Activated T-helper 1 cell treated with anti-CD3 and anti-CD28 coated beads, Interleukin-12 subunit alpha, Interleukin-12 subunit beta, Interleukin-2, Interleukin-4 antibody, amounts not matched to agents 30 ng/mL and 10 ng/mL and 1 ng/mL, durations not matched to agents 14 hours and 24 hours and 36 hours (primary cell): ENCODE measurements at regions of chr7 and their contacts with region 1.

Region 1: DNA sequence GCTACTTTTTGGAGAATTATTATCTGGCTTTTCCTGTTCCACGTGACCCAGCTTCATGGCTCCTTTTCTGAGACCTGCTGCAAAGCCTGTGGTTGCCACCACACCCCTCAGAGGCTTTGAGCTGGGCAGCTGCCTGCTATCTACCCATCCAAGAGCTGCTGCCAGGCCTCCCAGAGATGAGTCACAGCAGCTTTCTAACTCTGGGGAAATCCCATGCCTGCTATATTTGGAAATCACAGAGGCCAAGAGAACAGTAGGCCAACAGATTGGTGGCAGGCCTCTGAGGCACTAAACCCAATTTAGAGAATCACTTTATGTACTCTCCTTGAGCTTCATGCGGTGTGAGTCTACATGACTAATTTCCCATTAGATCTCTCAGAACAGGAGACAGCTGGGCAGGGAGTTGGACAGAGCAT is 35.2 kb downstream of the SGCE start:
- DNase-seq: peak; percentile 17
- H3K4me3 Mint-ChIP-seq: peak overlapping the region; percentile 27
- H3K27ac Mint-ChIP-seq: no peak overlapping the region
- H3K4me1 Mint-ChIP-seq: peaks cover 12% of the 10 kb centered on the region
- H3K27me3 Mint-ChIP-seq: peaks cover 3% of the 10 kb centered on the region

Region 2: GRCh38 chr7:94492596-94492995 is 128.1 kb before region 1 on chr7:
- intact Hi-C with region 1: loop called (anchors 5 kb)
- DNase-seq: no peak
- H3K4me3 Mint-ChIP-seq: no peak overlapping the region
- H3K27ac Mint-ChIP-seq: no peak overlapping the region
- H3K4me1 Mint-ChIP-seq: no peaks in the 10 kb centered on the region
- H3K27me3 Mint-ChIP-seq: peaks cover 9% of the 10 kb centered on the region

Region 3: DNA sequence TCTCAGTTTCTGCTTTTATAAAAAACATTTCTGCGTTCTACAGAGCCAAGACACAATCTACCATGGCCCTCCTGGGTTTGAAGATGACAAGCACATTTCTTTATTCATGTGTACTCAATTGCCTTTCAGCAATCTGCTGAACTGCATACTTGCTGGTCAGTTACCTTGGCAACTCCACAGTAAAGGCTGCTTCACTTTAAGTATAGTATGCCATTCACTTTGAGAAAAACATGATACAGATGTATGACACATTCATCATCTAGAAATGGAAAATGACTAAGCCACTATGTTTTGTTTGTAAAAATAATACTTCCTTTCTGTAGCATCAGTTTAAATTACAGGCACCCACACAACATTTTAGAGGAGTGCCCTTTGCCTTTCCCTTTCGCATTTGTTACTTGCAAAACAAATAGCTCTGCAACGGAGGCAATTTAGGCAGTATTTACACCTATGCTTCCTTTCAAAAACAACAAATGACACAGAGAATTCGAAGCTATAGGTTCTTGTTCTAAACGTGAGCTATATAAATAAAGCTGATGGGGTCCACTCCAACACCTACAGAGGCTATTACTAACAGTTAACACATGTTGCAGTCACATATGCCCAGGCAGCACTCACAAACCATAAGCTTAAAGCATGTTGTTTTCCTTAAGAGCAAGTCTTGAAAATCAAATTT is 11.8 kb after region 1 on chr7:
- intact Hi-C with region 1: loop called (anchors 1 kb)
- DNase-seq: no peak
- H3K4me3 Mint-ChIP-seq: no peak overlapping the region
- H3K27ac Mint-ChIP-seq: no peak overlapping the region
- H3K4me1 Mint-ChIP-seq: no peaks in the 10 kb centered on the region
- H3K27me3 Mint-ChIP-seq: no peaks in the 10 kb centered on the region

Region 4: DNA sequence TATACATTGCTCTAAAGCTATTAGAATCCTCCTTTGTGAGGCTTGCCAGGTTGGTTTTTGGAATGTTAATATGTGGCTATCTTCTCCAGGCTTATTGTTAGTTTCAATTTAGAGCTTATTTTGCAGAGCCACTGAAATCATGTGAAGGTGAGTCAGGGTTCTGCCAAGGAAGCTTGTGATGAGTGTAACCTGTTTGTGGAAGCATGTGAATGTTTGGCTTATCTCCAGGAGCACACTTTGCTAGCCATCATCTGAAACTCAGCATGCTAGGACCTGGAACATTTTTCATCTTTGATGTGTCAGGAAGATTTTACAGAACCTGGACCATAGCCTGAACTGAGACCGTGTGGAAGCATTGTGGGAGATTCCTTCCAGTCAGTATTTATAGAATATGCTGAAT is 484.0 kb after region 1 on chr7:
- intact Hi-C with region 1: no loop called
- DNase-seq: no peak
- H3K4me3 Mint-ChIP-seq: no peak overlapping the region
- H3K27ac Mint-ChIP-seq: no peak overlapping the region
- H3K4me1 Mint-ChIP-seq: no peaks in the 10 kb centered on the region
- H3K27me3 Mint-ChIP-seq: no peaks in the 10 kb centered on the region